Activated CD4-positive, alpha-beta T cell treated with anti-CD3 and anti-CD28 coated beads, Interleukin-2, amount 10 ng/mL, durations not matched to agents 7 days and 5 days (primary cell): ENCODE measurements at regions of chr2 and their contacts with region 1.

Region 1: GRCh38 chr2:200483729-200484198 is 26.1 kb downstream of the KCTD18 start:
- DNase-seq: peak; percentile 26
- H3K4me3 Mint-ChIP-seq: no peak overlapping the region
- H3K27ac Mint-ChIP-seq: no peak overlapping the region
- H3K4me1 Mint-ChIP-seq: peaks cover 17% of the 10 kb centered on the region
- H3K27me3 Mint-ChIP-seq: no peaks in the 10 kb centered on the region

Region 2: DNA sequence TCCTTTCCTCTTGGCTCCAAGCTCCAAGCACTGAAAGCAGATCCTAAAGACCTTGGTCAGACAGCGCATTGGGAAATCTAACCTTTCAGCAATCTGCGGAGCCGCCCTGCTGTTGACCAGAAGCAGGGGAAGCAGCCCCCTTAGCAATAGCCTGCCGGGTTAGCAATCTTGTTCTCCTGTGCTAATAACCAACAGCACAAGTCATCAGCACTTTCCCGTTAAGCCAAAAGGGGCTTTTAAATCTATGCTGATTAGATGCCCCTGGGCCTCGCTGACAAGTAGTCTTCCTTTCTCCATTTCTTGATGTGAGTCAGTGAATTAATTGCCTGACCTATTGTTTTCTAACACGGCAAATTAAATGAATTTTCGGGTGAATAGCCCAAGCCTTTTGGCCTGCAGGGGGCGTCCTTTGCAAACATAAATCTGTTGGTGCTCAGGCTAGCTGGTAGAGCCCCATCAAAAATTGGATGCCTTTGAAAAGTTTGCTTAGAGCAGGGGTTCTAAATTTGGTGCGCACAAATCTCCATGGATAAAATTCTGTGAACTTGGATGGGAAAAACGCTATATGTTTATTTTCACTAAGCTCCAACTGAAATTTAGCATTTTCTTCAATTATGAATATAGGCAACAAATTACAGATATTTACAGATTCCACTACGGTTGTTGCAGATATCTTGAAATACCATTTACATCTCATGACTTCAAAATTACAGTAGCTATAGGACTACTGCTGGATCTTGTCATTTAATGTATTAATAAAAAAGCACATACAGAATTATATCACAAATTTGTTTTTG is 503.7 kb before region 1 on chr2:
- CTCF ChIA-PET with region 1: interaction called, 10 read pairs
- POLR2A ChIA-PET with region 1: no interaction called
- DNase-seq: peak; percentile 86
- H3K4me3 Mint-ChIP-seq: no peak overlapping the region
- H3K27ac Mint-ChIP-seq: no peak overlapping the region
- H3K4me1 Mint-ChIP-seq: peaks cover 22% of the 10 kb centered on the region
- H3K27me3 Mint-ChIP-seq: no peaks in the 10 kb centered on the region

Region 3: GRCh38 chr2:200466425-200467418 is 17.0 kb before region 1 on chr2:
- CTCF ChIA-PET with region 1: interaction called, 12 read pairs
- POLR2A ChIA-PET with region 1: no interaction called
- DNase-seq: peak; percentile 28
- H3K4me3 Mint-ChIP-seq: peak overlapping the region; percentile 56
- H3K27ac Mint-ChIP-seq: peak overlapping the region; percentile 89
- H3K4me1 Mint-ChIP-seq: peaks cover 62% of the 10 kb centered on the region
- H3K27me3 Mint-ChIP-seq: no peaks in the 10 kb centered on the region

Region 4: GRCh38 chr2:200578778-200579177 is 95.0 kb after region 1 on chr2:
- CTCF ChIA-PET with region 1: no interaction called
- POLR2A ChIA-PET with region 1: no interaction called
- DNase-seq: no peak
- H3K4me3 Mint-ChIP-seq: no peak overlapping the region
- H3K27ac Mint-ChIP-seq: no peak overlapping the region
- H3K4me1 Mint-ChIP-seq: peaks cover 20% of the 10 kb centered on the region
- H3K27me3 Mint-ChIP-seq: no peaks in the 10 kb centered on the region

Region 5: GRCh38 chr2:200703127-200703925 is 219.6 kb after region 1 on chr2:
- CTCF ChIA-PET with region 1: interaction called, 12 read pairs
- POLR2A ChIA-PET with region 1: no interaction called
- DNase-seq: peak; percentile 54
- H3K4me3 Mint-ChIP-seq: no peak overlapping the region
- H3K27ac Mint-ChIP-seq: no peak overlapping the region
- H3K4me1 Mint-ChIP-seq: peaks cover 18% of the 10 kb centered on the region
- H3K27me3 Mint-ChIP-seq: peaks cover 3% of the 10 kb centered on the region